ENCODE measurements at regions of chr11 and their contacts with region 1.

Region 1: DNA sequence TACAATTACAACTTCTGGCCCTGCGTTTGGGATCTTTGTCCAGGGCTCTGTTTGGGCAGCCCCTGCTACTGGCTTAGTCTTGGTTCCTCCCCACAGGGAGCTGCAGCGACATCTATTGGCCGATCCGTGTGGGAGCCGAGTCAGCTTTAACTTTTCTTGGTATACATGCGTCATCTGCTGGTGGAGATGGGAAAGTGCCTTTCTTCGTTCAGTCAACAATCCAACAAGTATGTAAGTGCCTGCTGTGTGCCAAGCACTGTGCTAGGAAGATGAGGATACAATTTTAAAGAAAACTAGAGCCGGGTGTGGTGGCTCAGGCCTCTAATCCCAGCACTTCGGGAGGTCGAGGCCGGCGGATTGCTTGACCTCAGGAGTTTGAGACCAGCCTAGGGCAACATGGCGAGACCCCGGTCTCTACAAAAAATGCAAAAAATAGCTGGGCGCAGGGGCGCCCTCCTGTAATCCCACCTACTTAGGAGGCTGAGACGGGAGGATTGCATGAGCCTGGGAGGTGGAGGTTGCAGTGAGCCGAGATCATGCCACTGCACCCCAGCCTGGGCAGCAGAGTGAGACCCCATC is 8.2 kb downstream of the TPBGL start:
- DNase-seq: peak; percentile 90
- H3K4me3 ChIP-seq: peak overlapping the region in 1 of 2 experiments; percentile 54; a peak in 1 of 4 replicates
- H3K27ac ChIP-seq: no peak overlapping the region
- H3K4me1 ChIP-seq: peaks cover 0 to 5% of the 10 kb centered on the region in 2 experiments; a peak in 1 of 4 replicates
- H3K27me3 ChIP-seq: peaks cover 20% of the 10 kb centered on the region
- CTCF ChIP-seq: peak; percentile 100
- EP300 ChIP-seq: no peak
- RAD21 ChIP-seq: peak; percentile 100

Region 2: DNA sequence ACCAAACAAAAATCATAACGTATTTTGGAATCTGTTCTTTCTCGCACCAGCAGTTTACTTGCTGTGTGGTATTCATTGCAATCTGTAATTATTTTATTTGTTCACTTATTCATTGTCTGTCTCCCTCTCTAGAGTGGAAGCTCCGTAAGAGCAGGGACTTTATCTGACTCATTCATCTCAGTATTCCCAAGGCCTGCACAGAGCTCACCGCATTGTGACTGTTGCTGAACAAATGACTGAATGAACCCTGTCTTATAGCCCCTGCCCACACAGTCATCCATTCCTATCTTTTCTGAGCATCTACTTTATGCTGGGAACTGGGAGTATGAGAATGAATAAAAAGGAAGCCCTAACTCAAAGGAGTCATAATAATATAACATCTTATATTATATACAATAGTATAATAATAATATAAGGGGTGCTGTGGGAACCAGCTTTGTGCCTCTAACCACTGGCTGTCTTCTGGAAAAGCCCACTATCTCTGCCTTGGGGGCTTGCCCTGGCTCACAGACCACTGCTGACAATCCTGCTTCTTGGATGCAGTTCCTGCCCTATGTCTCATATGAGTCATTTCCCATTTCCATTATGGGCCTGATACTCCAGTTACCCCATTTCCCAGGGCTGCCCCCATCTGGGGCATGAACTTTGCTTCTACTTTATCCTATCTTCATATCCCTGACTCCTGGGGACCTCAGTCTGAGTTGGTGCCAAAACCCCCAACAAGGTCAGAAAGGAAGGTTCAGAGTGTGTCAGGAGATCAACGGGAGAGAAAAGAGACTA is 310.9 kb before region 1 on chr11:
- CTCF ChIA-PET with region 1: interaction called, 113 read pairs
- POLR2A ChIA-PET with region 1: no interaction called
- DNase-seq: no peak
- H3K4me3 ChIP-seq: no peak overlapping the region
- H3K27ac ChIP-seq: peak overlapping the region in 1 of 2 experiments; percentile 80; a peak in 2 of 4 replicates
- H3K4me1 ChIP-seq: peaks cover 18 to 21% of the 10 kb centered on the region in 2 experiments
- H3K27me3 ChIP-seq: no peaks in the 10 kb centered on the region
- CTCF ChIP-seq: no peak
- EP300 ChIP-seq: no peak
- RAD21 ChIP-seq: no peak

Region 3: DNA sequence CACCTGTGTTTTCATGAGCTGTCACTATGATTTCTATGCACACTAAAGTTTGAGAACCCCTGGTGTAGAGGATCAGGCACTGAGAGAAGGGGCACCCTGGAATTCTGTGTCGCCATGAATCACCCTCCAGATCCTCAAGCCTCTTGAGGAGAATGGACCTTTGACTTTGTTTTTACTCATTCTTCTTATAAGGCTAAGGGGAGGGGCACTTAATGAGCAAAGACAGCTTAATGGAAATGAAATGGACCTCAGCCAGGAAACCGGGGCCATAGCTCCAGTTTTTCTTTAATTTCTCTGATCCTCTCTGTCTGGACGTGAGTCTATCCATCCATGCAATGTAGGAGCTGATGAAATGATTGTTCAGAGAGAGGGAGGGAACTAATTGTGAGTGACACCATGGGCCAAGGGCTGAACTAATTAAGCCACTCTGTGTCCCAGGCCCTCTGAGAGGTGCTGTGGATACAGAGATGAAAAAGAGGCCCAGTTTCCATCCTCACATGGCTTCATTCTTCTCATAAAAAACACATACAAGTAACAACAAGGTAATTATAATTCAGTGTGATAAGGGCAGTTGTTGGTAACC is 185.0 kb before region 1 on chr11:
- CTCF ChIA-PET with region 1: interaction called, 11 read pairs
- POLR2A ChIA-PET with region 1: no interaction called
- DNase-seq: no peak
- H3K4me3 ChIP-seq: no peak overlapping the region
- H3K27ac ChIP-seq: no peak overlapping the region
- H3K4me1 ChIP-seq: peaks cover 0 to 2% of the 10 kb centered on the region in 2 experiments; a peak in 1 of 4 replicates
- H3K27me3 ChIP-seq: no peaks in the 10 kb centered on the region
- CTCF ChIP-seq: no peak
- EP300 ChIP-seq: no peak
- RAD21 ChIP-seq: no peak

Region 4: GRCh38 chr11:75174781-75175370 is 73.9 kb before region 1 on chr11:
- CTCF ChIA-PET with region 1: interaction called, 12 read pairs
- POLR2A ChIA-PET with region 1: no interaction called
- DNase-seq: no peak
- H3K4me3 ChIP-seq: no peak overlapping the region
- H3K27ac ChIP-seq: no peak overlapping the region
- H3K4me1 ChIP-seq: no peaks in the 10 kb centered on the region; a peak in 1 of 4 replicates
- H3K27me3 ChIP-seq: no peaks in the 10 kb centered on the region
- CTCF ChIP-seq: no peak
- EP300 ChIP-seq: no peak
- RAD21 ChIP-seq: no peak

Region 5: DNA sequence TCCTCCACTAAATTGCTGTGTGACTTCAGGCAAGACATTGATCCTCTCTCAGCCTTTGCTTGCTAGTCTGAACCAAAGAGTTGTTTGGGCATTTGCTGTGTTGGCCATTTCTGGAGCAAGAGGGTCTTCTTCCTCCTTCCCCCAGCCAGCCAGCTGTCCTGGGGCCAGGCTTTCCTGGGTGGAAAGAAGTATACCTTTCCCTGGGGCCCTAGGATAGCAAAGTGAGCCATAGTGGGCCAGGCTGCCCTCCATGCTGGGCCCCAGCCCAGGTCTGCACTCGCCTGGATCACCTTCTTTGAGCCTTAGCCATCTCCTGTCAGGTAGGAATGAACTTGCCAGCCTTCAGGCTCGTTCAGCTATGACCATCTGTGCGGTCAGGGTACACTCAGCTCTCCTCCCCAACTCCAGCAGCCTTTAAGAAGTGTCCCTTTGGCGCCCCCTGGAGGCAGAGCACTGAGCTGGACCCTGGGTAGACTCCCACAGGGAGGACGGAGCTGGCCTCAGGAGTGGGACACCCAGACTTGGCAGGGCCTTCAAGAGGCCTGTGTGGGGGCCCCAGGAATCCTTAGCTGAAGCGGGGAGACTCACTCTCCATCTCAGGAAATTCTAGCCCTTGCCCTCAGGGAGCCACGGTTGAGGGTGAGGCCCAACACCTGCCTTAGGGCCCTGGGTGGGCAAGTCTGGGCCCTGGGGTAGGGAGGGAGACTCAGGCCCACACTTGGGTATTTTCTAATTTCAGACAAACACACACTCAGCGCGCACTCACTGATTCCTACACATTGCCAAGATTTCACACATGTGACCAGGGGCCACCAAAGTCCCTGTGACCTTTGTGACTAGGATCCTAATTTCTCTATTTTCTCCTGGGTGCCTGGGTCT is 43.9 kb before region 1 on chr11:
- CTCF ChIA-PET with region 1: interaction called, 362 read pairs
- POLR2A ChIA-PET with region 1: no interaction called
- DNase-seq: peak; percentile 88
- H3K4me3 ChIP-seq: no peak overlapping the region; a peak in 1 of 4 replicates
- H3K27ac ChIP-seq: no peak overlapping the region
- H3K4me1 ChIP-seq: peaks cover 0 to 9% of the 10 kb centered on the region in 2 experiments; a peak in 1 of 4 replicates
- H3K27me3 ChIP-seq: no peaks in the 10 kb centered on the region; the same call in 1 of the 2 replicates
- CTCF ChIP-seq: peak; percentile 87
- EP300 ChIP-seq: no peak
- RAD21 ChIP-seq: peak; percentile 90

Region 6: GRCh38 chr11:75263944-75264349 is 15.2 kb after region 1 on chr11:
- CTCF ChIA-PET with region 1: interaction called, 28 read pairs
- POLR2A ChIA-PET with region 1: no interaction called
- DNase-seq: no peak
- H3K4me3 ChIP-seq: no peak overlapping the region
- H3K27ac ChIP-seq: no peak overlapping the region
- H3K4me1 ChIP-seq: peaks cover 0 to 12% of the 10 kb centered on the region in 2 experiments; a peak in 1 of 4 replicates
- H3K27me3 ChIP-seq: no peaks in the 10 kb centered on the region
- CTCF ChIP-seq: no peak
- EP300 ChIP-seq: no peak
- RAD21 ChIP-seq: no peak

Region 7: GRCh38 chr11:75441804-75442132 is 193.0 kb after region 1 on chr11:
- CTCF ChIA-PET with region 1: no interaction called
- POLR2A ChIA-PET with region 1: no interaction called
- DNase-seq: no peak
- H3K4me3 ChIP-seq: no peak overlapping the region
- H3K27ac ChIP-seq: no peak overlapping the region
- H3K4me1 ChIP-seq: peaks cover 0 to 2% of the 10 kb centered on the region in 2 experiments; a peak in 1 of 4 replicates
- H3K27me3 ChIP-seq: no peaks in the 10 kb centered on the region
- CTCF ChIP-seq: no peak
- EP300 ChIP-seq: no peak
- RAD21 ChIP-seq: no peak

Measured in SK-N-SH (cell line).